Activated CD4-positive, alpha-beta T cell treated with anti-CD3 and anti-CD28 coated beads, Interleukin-2, amount 10 ng/mL, durations not matched to agents 24 days and 14 days (primary cell): ENCODE measurements at regions of chr1 and their contacts with region 1.

Region 1: DNA sequence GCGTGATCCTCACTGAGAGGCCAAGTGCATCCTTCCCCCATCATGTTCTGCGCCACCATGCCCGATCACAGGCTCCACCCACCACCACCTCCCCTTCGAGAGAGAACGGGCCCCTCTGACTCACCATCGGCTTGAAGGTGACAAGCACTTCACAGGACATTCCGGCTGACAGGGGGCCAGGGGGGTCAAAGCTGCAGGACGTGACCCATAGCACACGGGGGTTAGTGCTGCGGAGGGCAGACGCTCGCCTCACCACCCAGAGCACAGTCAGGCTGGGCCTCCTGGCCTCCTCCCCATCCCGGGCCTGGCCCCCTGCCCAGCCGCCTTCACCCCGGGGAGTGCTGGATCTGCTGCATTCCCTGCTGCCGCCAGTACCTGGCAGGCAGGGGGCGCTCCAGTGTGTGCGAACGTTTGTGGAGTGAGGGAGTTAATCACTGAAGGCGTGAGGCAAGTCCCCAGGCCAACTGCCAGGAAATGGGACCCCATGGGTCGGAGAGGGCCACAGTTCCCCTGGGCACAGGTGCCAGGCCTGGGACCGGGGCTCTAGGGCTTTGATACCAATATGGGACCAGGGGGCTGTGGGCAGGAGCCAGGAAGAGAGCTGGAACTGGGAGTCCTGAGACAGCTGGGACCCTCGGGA is 40.9 kb upstream of the TMEM52 start:
- DNase-seq: peak; percentile 92
- H3K4me3 Mint-ChIP-seq: no peak overlapping the region
- H3K27ac Mint-ChIP-seq: no peak overlapping the region
- H3K4me1 Mint-ChIP-seq: no peaks in the 10 kb centered on the region
- H3K27me3 Mint-ChIP-seq: peaks cover 6% of the 10 kb centered on the region

Region 2: DNA sequence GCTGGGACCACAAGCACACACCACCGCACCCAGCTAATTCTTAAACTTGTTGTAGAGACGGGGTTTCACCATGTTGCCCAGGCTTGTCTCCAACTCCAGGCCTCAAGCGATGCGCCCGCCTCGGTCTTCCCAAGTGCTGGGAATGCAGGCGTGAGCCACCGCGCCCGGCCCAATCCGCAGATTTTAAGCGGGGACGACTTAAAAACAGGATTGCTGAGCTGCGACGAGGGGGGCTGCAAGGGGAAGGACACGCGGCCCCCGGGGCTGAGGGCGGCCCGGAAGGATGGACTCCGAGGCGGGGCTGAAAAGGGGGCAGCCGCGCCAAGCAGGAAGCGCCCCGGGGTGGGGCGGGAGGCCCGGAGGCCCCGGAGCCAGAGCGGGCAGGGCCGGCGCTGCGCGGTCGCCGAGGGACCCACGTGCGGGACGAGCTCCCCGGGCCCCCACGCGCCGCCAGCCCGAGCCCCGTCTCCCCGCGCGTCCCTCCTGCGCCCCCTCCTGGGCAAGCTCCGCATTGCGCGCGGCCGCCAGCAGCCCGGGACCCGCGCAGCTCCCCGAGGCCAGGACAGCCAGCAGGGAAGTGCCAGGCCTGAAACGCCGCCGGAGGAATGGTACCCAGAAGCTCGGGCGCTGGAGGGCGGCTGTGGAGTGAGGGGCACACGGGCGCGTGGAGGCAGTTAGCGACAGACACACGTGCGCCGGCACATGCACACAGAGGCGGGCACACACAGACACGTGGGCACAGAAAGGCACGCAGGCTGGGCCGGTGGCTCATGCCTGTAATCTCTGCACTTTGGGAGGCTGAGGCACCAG is 84.8 kb after region 1 on chr1:
- intact Hi-C with region 1: loop called (anchors 2 kb)
- DNase-seq: peak; percentile 94
- H3K4me3 Mint-ChIP-seq: peak overlapping the region; percentile 51
- H3K27ac Mint-ChIP-seq: no peak overlapping the region
- H3K4me1 Mint-ChIP-seq: peaks cover 8% of the 10 kb centered on the region
- H3K27me3 Mint-ChIP-seq: peaks cover 36% of the 10 kb centered on the region